T-cell (primary cell): ENCODE measurements at regions of chr10 and their contacts with region 1.

Region 1: DNA sequence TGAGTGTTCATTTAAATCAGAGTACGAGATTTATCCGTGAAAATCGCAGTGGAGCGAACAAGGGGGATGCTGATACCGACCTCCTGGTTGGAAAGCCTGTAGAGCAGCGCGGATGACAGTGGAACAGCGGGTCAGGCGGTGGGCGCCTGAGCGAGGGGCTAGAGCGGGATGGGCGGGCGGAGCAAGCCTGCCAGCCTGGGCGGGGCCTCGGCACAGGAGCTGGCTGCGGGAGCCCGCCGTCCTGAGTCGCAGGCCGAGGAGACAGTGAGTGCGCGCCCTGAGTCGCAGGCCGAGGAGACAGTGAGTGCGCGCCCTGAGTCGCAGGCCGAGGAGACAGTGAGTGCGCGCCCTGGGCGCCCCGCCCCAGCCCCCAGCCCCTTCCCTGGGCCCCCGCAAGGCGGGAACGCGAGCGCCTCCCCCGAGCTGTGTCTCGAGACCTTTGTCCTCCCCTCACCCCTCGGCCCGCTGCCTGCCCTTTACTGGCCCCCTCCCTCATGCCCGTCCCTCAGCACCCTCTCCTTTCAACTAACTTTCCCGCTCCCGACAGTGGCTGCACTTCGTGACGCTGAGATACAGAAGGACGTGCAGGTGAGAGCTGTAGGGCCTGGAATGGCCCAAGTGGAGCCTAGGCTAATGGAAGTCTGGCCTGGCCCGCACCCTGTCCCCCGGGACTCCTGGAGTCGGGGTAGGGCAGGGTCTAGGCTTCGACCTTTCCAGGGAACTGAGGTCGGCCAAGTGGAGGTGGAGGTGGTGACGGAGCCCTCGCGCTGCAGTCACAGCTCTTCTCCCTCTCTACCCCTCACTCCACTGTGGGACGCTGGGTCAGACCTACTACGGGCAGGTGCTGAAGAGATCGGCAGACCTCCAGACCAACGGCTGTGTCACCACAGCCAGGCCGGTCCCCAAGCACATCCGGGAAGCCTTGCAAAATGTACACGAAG is at the start of gene AS3MT:
- DNase-seq: peak in 3 of 35 experiments; percentile 3 to 8 (median 4)
- ATAC-seq: peak; percentile 48 to 70 (median 64)
- H3K4me3 ChIP-seq: peak within 1 kb of the TSS in 1 of 2 donors; percentile 59
- H3K4me3 Mint-ChIP-seq: peak within 1 kb of the TSS; percentile 17 to 60 (median 51)
- H3K27ac ChIP-seq: no peak within 1 kb of the TSS
- H3K27ac Mint-ChIP-seq: no peak within 1 kb of the TSS
- H3K4me1 ChIP-seq: peaks cover 0 to 10% of the 10 kb centered on the region in 2 experiments
- H3K4me1 Mint-ChIP-seq: peaks cover 11 to 14% (median 13%) of the 10 kb centered on the region in 3 donors
- H3K27me3 ChIP-seq: peaks cover 4 to 14% of the 10 kb centered on the region in 2 experiments
- H3K27me3 Mint-ChIP-seq: peaks cover 27 to 34% of the 10 kb centered on the region in 2 donors
- total RNA-seq, gene AS3MT: 0.26 to 1.3 (median 0.50) TPM

Region 2: GRCh38 chr10:102802920-102803534 is 66.5 kb before region 1 on chr10:
- CTCF ChIA-PET with region 1: no interaction called
- POLR2A ChIA-PET with region 1: no interaction called
- DNase-seq: peak in 1 of 35 experiments; percentile 24
- ATAC-seq: peak in 1 of 4 experiments; percentile 35
- H3K4me3 ChIP-seq: no peak overlapping the region
- H3K4me3 Mint-ChIP-seq: no peak overlapping the region
- H3K27ac ChIP-seq: no peak overlapping the region
- H3K27ac Mint-ChIP-seq: peak overlapping the region; percentile 69 to 80
- H3K4me1 ChIP-seq: peaks cover 7 to 10% of the 10 kb centered on the region in 2 experiments
- H3K4me1 Mint-ChIP-seq: peaks cover 21 to 41% (median 38%) of the 10 kb centered on the region in 3 donors
- H3K27me3 ChIP-seq: no peaks in the 10 kb centered on the region
- H3K27me3 Mint-ChIP-seq: no peaks in the 10 kb centered on the region

Region 3: DNA sequence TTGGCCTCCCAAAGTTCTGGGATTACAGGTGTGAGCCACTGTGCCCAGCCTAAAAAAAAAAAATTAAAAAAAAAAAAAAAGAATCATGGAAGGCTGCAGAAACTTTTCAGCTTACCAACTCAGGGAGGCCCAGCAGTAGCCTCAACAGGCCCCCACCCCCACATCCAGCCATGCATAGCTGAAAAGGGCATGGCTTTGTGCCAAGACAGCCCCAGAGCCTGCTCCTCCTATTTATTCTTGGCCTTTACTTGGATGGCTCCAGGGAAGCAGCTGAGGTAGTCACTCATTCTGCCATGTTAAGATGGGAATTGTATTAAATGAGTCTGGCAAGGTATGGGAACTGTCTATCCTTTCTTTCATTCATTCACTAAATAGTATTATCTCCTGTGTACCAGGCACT is 34.8 kb after region 1 on chr10:
- CTCF ChIA-PET with region 1: no interaction called
- POLR2A ChIA-PET with region 1: interaction called in 1 of 2 experiments, 11 read pairs
- DNase-seq: no peak
- ATAC-seq: no peak
- H3K4me3 ChIP-seq: no peak overlapping the region
- H3K4me3 Mint-ChIP-seq: no peak overlapping the region
- H3K27ac ChIP-seq: no peak overlapping the region
- H3K27ac Mint-ChIP-seq: no peak overlapping the region
- H3K4me1 ChIP-seq: no peaks in the 10 kb centered on the region
- H3K4me1 Mint-ChIP-seq: no peaks in the 10 kb centered on the region
- H3K27me3 ChIP-seq: no peaks in the 10 kb centered on the region
- H3K27me3 Mint-ChIP-seq: no peaks in the 10 kb centered on the region